Activated B cell treated with CpG ODN at 0.5 μM for 24 hours (primary cell): ENCODE measurements at regions of chr1 and their contacts with region 1.

Region 1: DNA sequence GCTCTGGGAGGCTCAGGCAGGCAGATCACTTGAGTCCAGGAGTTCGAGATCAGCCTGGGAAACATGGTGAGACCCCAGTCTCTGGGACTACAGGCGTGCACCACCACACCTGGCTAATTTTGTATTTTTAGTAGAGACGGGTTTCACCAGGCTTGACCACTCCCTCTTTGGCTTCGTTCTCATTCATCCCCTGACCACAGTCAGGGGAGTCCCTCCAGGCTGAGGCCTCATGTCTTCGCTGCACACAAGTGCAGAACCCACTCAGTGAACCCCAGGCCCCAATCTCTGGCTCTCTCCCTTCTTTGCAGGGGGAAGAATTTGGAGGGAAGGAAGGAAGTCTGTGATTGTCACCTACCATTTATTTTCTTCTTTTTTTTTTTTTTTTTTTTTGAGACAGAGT is 9.2 kb upstream of the RPS6KA1 start:
- DNase-seq: no peak
- ATAC-seq: no peak
- H3K4me3 Mint-ChIP-seq: no peak overlapping the region
- H3K27ac Mint-ChIP-seq: no peak overlapping the region
- H3K4me1 Mint-ChIP-seq: no peaks in the 10 kb centered on the region
- H3K27me3 Mint-ChIP-seq: peaks cover 11% of the 10 kb centered on the region
- CTCF ChIP-seq: no peak

Region 2: GRCh38 chr1:26666855-26667254 is 146.5 kb after region 1 on chr1:
- CTCF ChIA-PET with region 1: no interaction called
- POLR2A ChIA-PET with region 1: interaction called, 10 read pairs
- intact Hi-C with region 1: no loop called
- DNase-seq: no peak
- ATAC-seq: no peak
- H3K4me3 Mint-ChIP-seq: no peak overlapping the region
- H3K27ac Mint-ChIP-seq: no peak overlapping the region
- H3K4me1 Mint-ChIP-seq: no peaks in the 10 kb centered on the region
- H3K27me3 Mint-ChIP-seq: no peaks in the 10 kb centered on the region
- CTCF ChIP-seq: no peak